ENCODE measurements at regions of chr21 and their contacts with region 1.

Region 1: GRCh38 chr21:32569261-32570230 is 15.8 kb downstream of the TCP10L start:
- DNase-seq: peak; percentile 56 to 80 (median 75)
- ATAC-seq: peak; percentile 96
- H3K4me3 ChIP-seq: peak overlapping the region; percentile 85
- H3K4me3 Mint-ChIP-seq: peak overlapping the region; percentile 82 to 95 (median 90)
- H3K27ac ChIP-seq: peak overlapping the region; percentile 65
- H3K27ac Mint-ChIP-seq: peak overlapping the region; percentile 46 to 90 (median 75)
- H3K4me1 ChIP-seq: peaks cover 5 to 7% of the 10 kb centered on the region in 2 donors
- H3K4me1 Mint-ChIP-seq: peaks cover 6 to 20% (median 17%) of the 10 kb centered on the region in 7 donors
- H3K27me3 ChIP-seq: no peaks in the 10 kb centered on the region
- H3K27me3 Mint-ChIP-seq: peaks cover 0 to 8% (median 0%) of the 10 kb centered on the region in 5 donors

Region 2: GRCh38 chr21:31866077-31866511 is 703.5 kb before region 1 on chr21:
- CTCF ChIA-PET with region 1: no interaction called
- POLR2A ChIA-PET with region 1: no interaction called
- intact Hi-C with region 1: loop called in 1 of 2 experiments (anchors 1 kb)
- DNase-seq: peak; percentile 16 to 70 (median 47)
- ATAC-seq: peak; percentile 72
- H3K4me3 ChIP-seq: no peak overlapping the region
- H3K4me3 Mint-ChIP-seq: no peak overlapping the region
- H3K27ac ChIP-seq: no peak overlapping the region
- H3K27ac Mint-ChIP-seq: no peak overlapping the region
- H3K4me1 ChIP-seq: no peaks in the 10 kb centered on the region
- H3K4me1 Mint-ChIP-seq: no peaks in the 10 kb centered on the region
- H3K27me3 ChIP-seq: no peaks in the 10 kb centered on the region
- H3K27me3 Mint-ChIP-seq: peaks cover 13 to 30% (median 23%) of the 10 kb centered on the region in 5 donors

Region 3: GRCh38 chr21:32392880-32393676 is 176.5 kb before region 1 on chr21 and contains the start of gene URB1:
- CTCF ChIA-PET with region 1: no interaction called
- POLR2A ChIA-PET with region 1: interaction called, 3 read pairs
- intact Hi-C with region 1: loop called in 1 of 2 experiments (anchors 2 kb)
- DNase-seq: peak; percentile 88 to 99 (median 94)
- ATAC-seq: peak; percentile 99
- H3K4me3 ChIP-seq: peak within 1 kb of the TSS; percentile 85
- H3K4me3 Mint-ChIP-seq: peak within 1 kb of the TSS; percentile 81 to 92 (median 86)
- H3K27ac ChIP-seq: peak within 1 kb of the TSS; percentile 70
- H3K27ac Mint-ChIP-seq: peak within 1 kb of the TSS; percentile 46 to 90 (median 71)
- H3K4me1 ChIP-seq: peaks cover 8 to 12% of the 10 kb centered on the region in 2 donors
- H3K4me1 Mint-ChIP-seq: peaks cover 34 to 52% (median 43%) of the 10 kb centered on the region in 7 donors
- H3K27me3 ChIP-seq: no peaks in the 10 kb centered on the region
- H3K27me3 Mint-ChIP-seq: peaks cover 2 to 20% (median 3%) of the 10 kb centered on the region in 5 donors
- total RNA-seq, gene URB1: 14.5 to 20.6 (median 17.9) TPM

Region 4: GRCh38 chr21:32412162-32413014 is 157.2 kb before region 1 on chr21 and contains the start of gene EVA1C:
- CTCF ChIA-PET with region 1: no interaction called
- POLR2A ChIA-PET with region 1: interaction called, 5 read pairs
- intact Hi-C with region 1: loop called in 1 of 2 experiments (anchors 1 kb)
- DNase-seq: peak; percentile 56 to 73 (median 70)
- ATAC-seq: peak; percentile 81
- H3K4me3 ChIP-seq: peak within 1 kb of the TSS; percentile 76
- H3K4me3 Mint-ChIP-seq: peak within 1 kb of the TSS; percentile 88 to 97 (median 94)
- H3K27ac ChIP-seq: peak within 1 kb of the TSS; percentile 85
- H3K27ac Mint-ChIP-seq: peak within 1 kb of the TSS; percentile 89 to 95 (median 93)
- H3K4me1 ChIP-seq: peaks cover 14 to 29% of the 10 kb centered on the region in 2 donors
- H3K4me1 Mint-ChIP-seq: peaks cover 22 to 57% (median 28%) of the 10 kb centered on the region in 7 donors
- H3K27me3 ChIP-seq: no peaks in the 10 kb centered on the region
- H3K27me3 Mint-ChIP-seq: peaks cover 0 to 7% (median 0%) of the 10 kb centered on the region in 5 donors
- total RNA-seq, gene EVA1C: 2.6 to 16.3 (median 12.3) TPM

Region 5: DNA sequence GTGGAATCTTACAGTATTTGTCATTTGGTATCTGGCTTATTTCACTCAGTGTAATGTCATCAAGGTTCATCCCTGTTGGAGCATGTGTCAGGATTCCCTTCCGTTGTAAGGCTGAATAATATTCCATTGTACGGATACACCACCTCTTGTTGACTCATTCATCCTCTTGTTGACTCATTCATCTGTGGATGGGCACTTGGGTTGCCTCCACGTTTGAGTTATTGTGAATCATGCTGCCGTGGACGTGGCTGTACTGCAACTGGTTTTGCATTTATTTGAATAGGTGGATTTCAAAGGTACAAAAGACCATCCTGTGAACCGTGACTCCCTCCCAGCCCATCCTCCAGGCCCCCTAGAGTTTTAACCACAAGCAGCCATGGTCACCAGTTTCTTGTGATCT is 27.7 kb after region 1 on chr21:
- CTCF ChIA-PET with region 1: interaction called, 17 read pairs
- POLR2A ChIA-PET with region 1: interaction called, 3 read pairs
- intact Hi-C with region 1: loop called in 1 of 2 experiments (anchors 1 kb)
- DNase-seq: no peak
- ATAC-seq: no peak
- H3K4me3 ChIP-seq: no peak overlapping the region
- H3K4me3 Mint-ChIP-seq: no peak overlapping the region
- H3K27ac ChIP-seq: no peak overlapping the region
- H3K27ac Mint-ChIP-seq: peak overlapping the region in 1 of 9 donors; percentile 8
- H3K4me1 ChIP-seq: no peaks in the 10 kb centered on the region
- H3K4me1 Mint-ChIP-seq: peaks cover 0 to 4% (median 0%) of the 10 kb centered on the region in 7 donors
- H3K27me3 ChIP-seq: no peaks in the 10 kb centered on the region
- H3K27me3 Mint-ChIP-seq: no peaks in the 10 kb centered on the region

Region 6: GRCh38 chr21:32653311-32653901 is 83.9 kb after region 1 on chr21:
- CTCF ChIA-PET with region 1: no interaction called
- POLR2A ChIA-PET with region 1: no interaction called
- intact Hi-C with region 1: no loop called
- DNase-seq: peak in 7 of 9 donors; percentile 8 to 40 (median 28)
- ATAC-seq: peak; percentile 64
- H3K4me3 ChIP-seq: no peak overlapping the region
- H3K4me3 Mint-ChIP-seq: no peak overlapping the region
- H3K27ac ChIP-seq: no peak overlapping the region
- H3K27ac Mint-ChIP-seq: no peak overlapping the region
- H3K4me1 ChIP-seq: no peaks in the 10 kb centered on the region
- H3K4me1 Mint-ChIP-seq: peaks cover 0 to 12% (median 0%) of the 10 kb centered on the region in 7 donors
- H3K27me3 ChIP-seq: no peaks in the 10 kb centered on the region
- H3K27me3 Mint-ChIP-seq: no peaks in the 10 kb centered on the region

Measured in naive thymus-derived CD4-positive, alpha-beta T cell (primary cell).